ENCODE measurements at regions of chr6 and their contacts with region 1.

Region 1: GRCh38 chr6:14210663-14211561 is 93.3 kb downstream of the CD83 start:
- DNase-seq: peak; percentile 67 to 97
- H3K4me3 ChIP-seq: peak overlapping the region; percentile 96
- H3K27ac ChIP-seq: peak overlapping the region; percentile 51
- H3K4me1 ChIP-seq: peaks cover 14% of the 10 kb centered on the region
- H3K27me3 ChIP-seq: no peaks in the 10 kb centered on the region
- CTCF ChIP-seq: no peak

Region 2: GRCh38 chr6:14310960-14311359 is 100.0 kb after region 1 on chr6:
- CTCF ChIA-PET with region 1: no interaction called
- POLR2A ChIA-PET with region 1: no interaction called
- intact Hi-C with region 1: no loop called
- DNase-seq: no peak
- H3K4me3 ChIP-seq: no peak overlapping the region
- H3K27ac ChIP-seq: no peak overlapping the region
- H3K4me1 ChIP-seq: no peaks in the 10 kb centered on the region
- H3K27me3 ChIP-seq: no peaks in the 10 kb centered on the region
- CTCF ChIP-seq: no peak

Region 3: GRCh38 chr6:14499841-14500240 is 288.9 kb after region 1 on chr6:
- CTCF ChIA-PET with region 1: no interaction called
- POLR2A ChIA-PET with region 1: interaction called, 3 read pairs
- intact Hi-C with region 1: loop called (anchors 2 kb)
- DNase-seq: peak; percentile 64 to 67
- H3K4me3 ChIP-seq: peak overlapping the region; percentile 10; the same call in 1 of the 2 replicates
- H3K27ac ChIP-seq: no peak overlapping the region
- H3K4me1 ChIP-seq: peaks cover 14% of the 10 kb centered on the region; the same call in 1 of the 2 replicates
- H3K27me3 ChIP-seq: no peaks in the 10 kb centered on the region
- CTCF ChIP-seq: no peak

Region 4: DNA sequence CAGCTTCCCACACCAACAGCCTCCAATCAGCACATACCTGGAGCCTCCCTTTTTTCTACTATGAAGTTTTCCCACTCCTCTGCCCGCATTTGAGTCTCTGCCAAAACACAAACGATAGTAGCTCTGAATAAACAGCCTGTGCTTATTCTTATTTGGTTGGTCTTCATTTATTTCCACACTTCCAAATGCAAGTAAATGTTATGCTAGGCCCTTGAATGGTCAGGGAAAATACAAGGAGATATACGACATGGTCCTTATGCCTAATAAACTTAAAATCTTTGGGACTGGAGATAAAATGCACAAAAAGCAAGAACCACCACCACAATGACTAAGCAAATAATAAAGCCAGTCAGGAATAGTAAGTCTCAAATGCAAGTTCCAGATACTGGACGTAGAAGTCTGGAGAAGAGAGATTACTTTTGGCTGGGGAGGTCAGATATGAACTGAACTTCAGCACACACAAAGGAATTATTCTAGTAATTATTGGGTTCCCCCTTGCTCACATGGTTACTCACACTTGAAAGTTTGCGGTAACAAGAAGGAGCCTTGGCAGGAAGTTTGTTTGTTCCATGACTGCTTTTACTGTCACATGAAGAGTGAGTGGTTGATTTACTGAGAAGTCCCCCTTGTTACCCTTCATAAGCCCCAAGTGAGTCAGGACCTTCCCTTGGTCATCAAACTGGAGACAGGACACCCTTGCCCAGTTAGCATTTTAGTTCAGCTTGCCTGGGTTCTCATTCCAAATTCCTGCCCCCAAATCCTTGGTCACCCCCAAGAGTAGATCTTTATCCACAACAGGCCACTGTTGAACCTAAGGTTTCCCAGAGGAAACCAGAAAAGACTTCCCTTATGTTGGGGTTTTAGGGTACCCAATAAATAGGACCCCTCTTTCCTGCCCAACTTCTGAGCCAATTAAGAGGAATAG is 523.8 kb after region 1 on chr6:
- CTCF ChIA-PET with region 1: no interaction called
- POLR2A ChIA-PET with region 1: no interaction called
- intact Hi-C with region 1: loop called (anchors 5 kb)
- DNase-seq: peak in 1 of 2 experiments; percentile 37
- H3K4me3 ChIP-seq: no peak overlapping the region; the same call in 1 of the 2 replicates
- H3K27ac ChIP-seq: peak overlapping the region; percentile 99
- H3K4me1 ChIP-seq: peaks cover 53% of the 10 kb centered on the region
- H3K27me3 ChIP-seq: no peaks in the 10 kb centered on the region
- CTCF ChIP-seq: no peak

Region 5: DNA sequence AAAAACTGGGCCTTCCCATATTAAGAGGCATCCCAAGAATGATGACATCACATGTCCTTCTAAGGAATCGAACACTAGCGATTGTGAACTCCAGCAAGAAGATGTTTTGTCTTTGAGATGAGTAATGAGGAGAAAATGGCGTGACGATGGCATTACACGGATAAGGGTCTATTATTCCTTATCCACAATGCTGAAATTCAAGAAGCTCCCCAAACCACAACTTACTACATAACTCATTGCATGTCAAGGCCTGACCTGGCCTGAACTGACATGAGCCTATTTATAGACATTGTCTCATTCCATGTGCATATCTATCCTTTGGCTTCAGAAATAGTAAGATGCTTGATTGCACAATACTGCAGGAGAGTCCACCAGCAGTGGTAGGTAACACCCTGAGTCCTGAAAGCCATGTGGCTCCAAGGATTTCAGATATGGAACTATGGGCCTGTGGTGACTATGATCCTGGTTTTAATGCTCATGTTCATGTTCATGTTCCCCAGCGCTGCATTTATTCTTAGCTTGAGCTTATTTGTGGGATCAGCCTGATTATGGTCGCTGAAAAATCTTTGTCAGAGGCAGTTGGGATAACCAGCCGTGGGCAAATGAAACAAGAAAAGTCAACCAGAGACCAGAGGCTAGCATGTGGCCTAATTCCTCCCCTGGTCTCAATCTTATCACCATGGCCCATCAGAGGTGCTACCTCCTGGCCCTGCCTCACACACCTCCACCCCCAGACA is 851.8 kb after region 1 on chr6:
- CTCF ChIA-PET with region 1: no interaction called
- POLR2A ChIA-PET with region 1: interaction called, 3 read pairs
- intact Hi-C with region 1: loop called (anchors 1 kb)
- DNase-seq: peak in 1 of 2 experiments; percentile 86
- H3K4me3 ChIP-seq: no peak overlapping the region
- H3K27ac ChIP-seq: no peak overlapping the region
- H3K4me1 ChIP-seq: peaks cover 7% of the 10 kb centered on the region; the same call in 1 of the 2 replicates
- H3K27me3 ChIP-seq: no peaks in the 10 kb centered on the region
- CTCF ChIP-seq: no peak